A673 (cell line): ENCODE measurements at regions of chr19 and their contacts with region 1.

Region 1: DNA sequence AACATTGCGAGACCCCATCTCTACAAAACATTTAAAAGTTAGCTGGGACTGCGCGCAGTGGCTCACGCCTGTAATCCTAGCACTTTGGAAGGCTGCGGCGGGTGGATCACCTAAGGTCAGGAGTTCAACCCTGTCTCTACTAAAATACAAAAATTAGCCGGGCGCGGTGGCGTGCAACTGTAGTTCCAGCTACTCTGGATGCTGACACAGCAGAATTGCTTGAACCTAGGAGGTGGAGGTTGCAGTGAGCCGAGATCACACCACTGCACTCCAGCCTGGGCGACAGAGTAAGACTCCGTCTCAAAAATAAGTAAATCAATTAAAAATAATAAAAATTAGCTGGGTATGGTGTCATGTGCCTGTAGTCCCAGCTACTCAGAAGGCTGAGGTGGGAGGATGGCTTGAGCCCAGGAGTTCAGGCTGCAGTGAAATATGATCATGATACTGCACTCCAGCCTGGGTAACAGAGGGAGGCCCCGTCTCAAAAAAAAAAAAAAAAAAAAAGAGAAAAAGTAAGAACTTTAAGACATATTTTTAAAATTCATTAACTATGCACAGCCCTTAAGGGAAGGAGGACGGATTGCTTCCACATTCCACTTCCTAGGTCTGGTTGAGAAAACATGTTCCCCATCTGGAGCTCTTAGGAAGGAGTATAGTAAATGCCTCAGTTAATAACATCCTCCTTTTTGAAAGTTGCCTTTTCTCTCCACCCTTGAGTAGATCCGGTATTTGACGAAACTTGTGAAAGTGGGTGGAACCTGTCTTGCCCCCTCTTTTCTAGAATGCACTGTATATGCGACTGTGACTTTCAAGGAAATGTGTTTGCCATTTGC is 26.1 kb downstream of the EXOC3L2 start:
- DNase-seq: no peak
- H3K4me3 ChIP-seq: no peak overlapping the region
- H3K27ac ChIP-seq: no peak overlapping the region
- H3K4me1 ChIP-seq: no peaks in the 10 kb centered on the region
- H3K27me3 ChIP-seq: peaks cover 67% of the 10 kb centered on the region
- CTCF ChIP-seq: no peak

Region 2: DNA sequence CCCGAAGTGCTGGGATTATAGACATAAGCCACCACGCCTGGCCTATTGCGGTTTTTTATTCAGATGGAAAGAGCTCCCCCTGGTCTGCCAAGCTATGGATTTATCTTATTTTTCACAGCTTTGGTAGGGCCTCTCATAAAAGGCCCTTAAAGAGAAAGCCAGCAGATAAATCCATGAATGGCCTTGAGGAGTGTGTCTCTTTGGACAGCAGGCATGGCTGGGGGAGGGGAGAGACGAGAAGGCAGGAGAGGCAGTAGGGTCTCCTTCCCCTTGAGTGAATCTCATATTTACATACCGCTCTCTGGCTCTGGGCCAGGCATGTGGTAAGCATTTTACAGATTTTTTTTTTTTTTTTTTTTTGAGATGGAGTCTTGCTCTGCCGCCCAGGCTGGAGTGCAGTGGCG is 57.2 kb after region 1 on chr19:
- CTCF ChIA-PET with region 1: interaction called, 12 read pairs
- POLR2A ChIA-PET with region 1: no interaction called
- intact Hi-C with region 1: no loop called
- DNase-seq: peak; percentile 66
- H3K4me3 ChIP-seq: no peak overlapping the region
- H3K27ac ChIP-seq: no peak overlapping the region
- H3K4me1 ChIP-seq: peaks cover 22% of the 10 kb centered on the region
- H3K27me3 ChIP-seq: no peaks in the 10 kb centered on the region
- CTCF ChIP-seq: 0 out of 2 replicates have a peak, but pooled peaks have one; percentile 13

Region 3: GRCh38 chr19:45391340-45391739 is 172.2 kb after region 1 on chr19:
- CTCF ChIA-PET with region 1: no interaction called
- POLR2A ChIA-PET with region 1: no interaction called
- intact Hi-C with region 1: no loop called
- DNase-seq: peak; percentile 49
- H3K4me3 ChIP-seq: no peak overlapping the region
- H3K27ac ChIP-seq: no peak overlapping the region
- H3K4me1 ChIP-seq: no peaks in the 10 kb centered on the region
- H3K27me3 ChIP-seq: peaks cover under 1% of the 10 kb centered on the region
- CTCF ChIP-seq: no peak